Esophagus squamous epithelium (tissue), 5 donors: ENCODE measurements at regions of chr5 and their contacts with region 1.

Region 1: GRCh38 chr5:80184235-80185023 is 71.4 kb downstream of the SERINC5 start:
- DNase-seq: no peak
- H3K4me3 ChIP-seq: no peak overlapping the region
- H3K27ac ChIP-seq: peak overlapping the region; percentile 56 to 84 (median 74)
- H3K4me1 ChIP-seq: peaks cover 38 to 83% (median 50%) of the 10 kb centered on the region in 3 donors
- H3K27me3 ChIP-seq: no peaks in the 10 kb centered on the region
- CTCF ChIP-seq: no peak
- POLR2A ChIP-seq: no peak

Region 2: GRCh38 chr5:80093796-80094195 is 90.6 kb before region 1 on chr5:
- intact Hi-C with region 1: no loop called
- DNase-seq: no peak
- H3K4me3 ChIP-seq: no peak overlapping the region
- H3K27ac ChIP-seq: no peak overlapping the region
- H3K4me1 ChIP-seq: peaks cover 0 to 3% (median 0%) of the 10 kb centered on the region in 3 donors
- H3K27me3 ChIP-seq: no peaks in the 10 kb centered on the region
- CTCF ChIP-seq: no peak
- POLR2A ChIP-seq: no peak

Region 3: DNA sequence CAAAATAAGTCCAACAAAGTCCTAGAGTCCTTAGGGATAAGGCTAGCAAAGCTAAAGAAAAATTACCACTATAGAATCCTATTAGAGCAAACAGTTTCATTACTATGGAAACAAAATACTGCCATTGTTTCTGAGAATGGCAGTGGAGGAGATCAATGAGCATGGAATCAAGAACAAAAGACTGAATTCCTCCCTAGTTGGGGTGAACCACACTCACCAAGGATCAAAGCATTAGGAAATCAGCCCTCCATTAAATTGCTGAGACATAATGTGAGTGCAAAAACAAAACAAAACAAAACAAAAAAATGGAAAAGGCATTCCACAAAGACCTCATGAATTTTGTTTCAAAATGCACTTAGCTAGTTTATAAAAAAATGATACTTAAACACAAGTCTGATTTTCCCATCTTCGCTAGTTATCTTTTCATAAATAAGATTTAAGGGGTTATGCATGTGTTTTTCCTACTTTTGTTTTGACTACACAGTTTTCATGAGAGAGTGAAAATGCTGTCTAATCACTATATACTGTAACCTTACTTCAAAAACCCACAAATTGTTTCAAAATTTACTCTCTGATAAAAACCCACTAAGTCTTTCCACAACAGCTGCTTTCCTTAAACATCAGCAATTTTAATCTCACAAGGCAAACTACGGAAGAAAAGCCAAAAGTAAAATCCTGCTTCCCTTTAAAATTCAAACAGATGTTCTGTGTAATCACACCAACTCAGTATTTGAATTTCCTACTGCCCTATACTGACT is 61.8 kb after region 1 on chr5:
- intact Hi-C with region 1: loop called (anchors 5 kb)
- DNase-seq: no peak
- H3K4me3 ChIP-seq: no peak overlapping the region
- H3K27ac ChIP-seq: peak overlapping the region; percentile 75 to 89 (median 82)
- H3K4me1 ChIP-seq: peaks cover 25 to 61% (median 30%) of the 10 kb centered on the region in 3 donors
- H3K27me3 ChIP-seq: no peaks in the 10 kb centered on the region
- CTCF ChIP-seq: no peak
- POLR2A ChIP-seq: no peak